ENCODE measurements at regions of chr12 and their contacts with region 1.

Region 1: GRCh38 chr12:53476769-53477209 is 22.5 kb downstream of the MAP3K12 start:
- DNase-seq: no peak
- CTCF ChIP-seq: no peak

Region 2: DNA sequence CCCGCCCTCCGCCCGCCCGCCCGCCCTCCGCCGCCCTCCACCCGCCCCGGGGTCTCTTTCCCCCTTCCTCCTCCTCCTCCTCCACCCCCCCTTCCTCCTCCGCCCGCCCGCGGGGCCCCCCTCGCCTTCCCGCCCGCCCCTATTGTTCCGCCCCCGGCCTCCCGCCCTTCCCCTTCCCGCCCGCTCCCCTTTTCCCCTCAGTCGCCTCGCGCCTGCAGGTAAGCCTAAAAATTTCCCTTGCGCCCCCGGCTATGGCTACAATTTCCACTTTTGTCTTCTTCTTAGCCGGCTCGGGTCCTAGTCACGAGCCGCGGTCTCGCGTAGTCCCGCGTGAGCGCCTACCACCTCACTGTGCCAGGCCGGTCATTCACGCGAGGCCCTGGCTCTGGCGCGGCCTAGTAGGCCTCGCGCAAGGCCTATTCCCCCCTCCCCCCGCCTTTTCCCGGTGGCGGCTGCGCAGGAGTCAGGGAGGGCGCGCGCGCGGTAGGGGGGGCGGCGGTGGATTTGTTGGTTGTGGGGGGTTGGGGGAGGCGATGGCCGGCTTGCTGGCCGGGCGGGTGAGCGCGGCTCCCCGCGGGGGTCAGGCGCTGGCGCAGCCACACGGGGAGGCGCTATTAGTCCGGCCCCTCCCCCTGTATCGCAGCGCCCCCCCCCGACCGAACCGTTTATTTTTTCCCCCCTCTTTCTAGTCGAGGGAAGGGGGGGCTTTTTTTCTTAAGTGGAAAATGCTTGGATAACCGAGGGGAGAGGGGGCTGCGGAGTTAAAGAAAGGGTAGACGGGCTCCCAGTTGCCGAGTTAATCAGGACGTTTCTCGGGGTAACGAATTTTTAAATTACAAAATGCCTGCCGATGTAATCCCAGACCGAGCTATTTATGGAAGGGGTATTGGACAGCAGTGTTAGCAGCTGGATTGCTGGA is 24.4 kb before region 1 on chr12:
- CTCF ChIA-PET with region 1: interaction called, 14 read pairs
- POLR2A ChIA-PET with region 1: interaction called, 4 read pairs
- DNase-seq: peak; percentile 85
- CTCF ChIP-seq: peak; percentile 30

Region 3: DNA sequence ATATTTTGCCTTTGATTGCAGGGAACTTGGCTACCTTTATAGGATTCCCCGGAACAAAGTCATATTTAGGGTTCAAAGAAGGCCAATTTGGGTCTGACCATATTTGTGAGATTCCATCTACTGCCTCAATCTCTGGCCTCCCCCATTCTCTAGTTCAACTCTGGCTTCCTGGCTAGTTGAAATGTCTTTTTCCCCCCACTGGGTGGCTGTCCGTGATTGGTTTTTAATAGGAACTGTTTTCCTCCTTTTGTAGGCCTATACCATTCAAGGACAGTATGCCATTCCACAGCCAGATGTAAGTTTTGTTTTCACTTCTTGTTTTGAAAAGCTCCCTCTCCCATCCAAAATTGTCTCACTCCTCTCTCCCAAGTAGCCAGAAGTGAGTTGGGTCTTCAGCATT is 11.1 kb before region 1 on chr12:
- CTCF ChIA-PET with region 1: interaction called, 22 read pairs
- POLR2A ChIA-PET with region 1: interaction called, 8 read pairs
- DNase-seq: no peak
- CTCF ChIP-seq: no peak

Region 4: DNA sequence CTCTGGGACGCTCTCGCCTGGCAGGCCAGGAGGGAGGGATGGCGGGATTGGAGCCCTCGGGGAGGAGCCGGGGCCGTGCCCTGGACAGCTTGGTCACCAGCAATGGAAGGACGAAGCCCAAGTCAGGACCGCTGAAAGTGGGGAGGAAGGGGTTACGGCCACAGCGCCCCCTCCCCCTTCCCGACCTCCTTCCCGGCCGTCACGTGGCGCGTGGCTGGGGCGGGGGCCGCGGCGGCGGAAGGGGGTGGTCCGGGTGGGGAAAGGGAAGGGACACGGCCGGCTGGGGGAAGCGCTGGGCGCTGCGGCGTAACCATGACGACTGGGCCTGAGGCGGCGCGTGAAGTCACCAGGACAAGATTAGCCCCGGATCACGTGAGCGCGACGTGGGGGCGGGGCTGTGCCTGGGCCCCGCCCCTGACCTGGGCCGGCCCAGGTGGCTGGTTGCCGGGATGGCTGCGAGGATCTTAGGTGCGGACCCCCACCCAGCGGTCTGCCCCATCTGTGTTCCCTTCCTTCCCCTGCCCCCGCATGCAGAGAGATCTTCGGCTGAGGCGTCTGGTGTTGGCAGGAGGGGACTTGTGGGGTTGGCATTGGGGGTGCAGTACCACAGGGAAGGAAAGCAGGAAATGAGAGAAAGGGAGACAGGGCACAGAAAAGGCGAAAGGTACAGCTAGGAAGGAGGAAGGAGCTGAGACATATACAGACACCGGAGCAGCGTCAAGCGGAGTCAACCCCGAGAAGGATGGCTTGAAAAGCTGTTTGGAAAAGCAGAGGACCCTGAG is 16.2 kb after region 1 on chr12:
- CTCF ChIA-PET with region 1: interaction called, 18 read pairs
- POLR2A ChIA-PET with region 1: interaction called, 12 read pairs
- DNase-seq: peak; percentile 93
- CTCF ChIP-seq: no peak